Calu3 (cell line): ENCODE measurements at regions of chr1 and their contacts with region 1.

Region 1: DNA sequence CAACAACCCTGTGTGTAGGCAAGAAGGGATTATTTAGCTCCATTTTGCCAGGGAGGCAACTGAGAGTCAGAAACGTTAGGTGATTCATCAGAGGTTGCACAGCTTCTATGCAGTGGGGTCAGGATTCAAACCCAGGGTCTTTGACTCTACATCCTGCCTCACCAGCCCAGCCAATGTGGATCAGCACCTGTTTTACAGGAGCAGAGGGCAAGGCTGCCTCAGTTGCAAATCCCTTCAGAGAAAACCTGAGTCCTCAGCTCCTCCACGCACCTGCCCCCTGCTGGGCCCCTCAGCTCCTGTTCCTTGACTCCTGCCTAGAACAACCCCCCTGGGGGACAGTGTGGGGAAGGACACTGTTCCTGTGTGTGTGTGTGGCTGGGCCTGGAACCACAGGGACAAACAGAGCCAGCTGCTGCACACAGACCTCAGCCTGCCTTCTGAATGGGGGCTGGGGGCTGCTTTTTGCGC is 61.6 kb downstream of the LRRN2 start:
- DNase-seq: peak; percentile 55
- H3K4me3 Mint-ChIP-seq: no peak overlapping the region
- H3K27ac Mint-ChIP-seq: no peak overlapping the region
- H3K4me1 Mint-ChIP-seq: peaks cover 42% of the 10 kb centered on the region
- H3K27me3 Mint-ChIP-seq: peaks cover 41% of the 10 kb centered on the region
- CTCF ChIP-seq: peak; percentile 54

Region 2: DNA sequence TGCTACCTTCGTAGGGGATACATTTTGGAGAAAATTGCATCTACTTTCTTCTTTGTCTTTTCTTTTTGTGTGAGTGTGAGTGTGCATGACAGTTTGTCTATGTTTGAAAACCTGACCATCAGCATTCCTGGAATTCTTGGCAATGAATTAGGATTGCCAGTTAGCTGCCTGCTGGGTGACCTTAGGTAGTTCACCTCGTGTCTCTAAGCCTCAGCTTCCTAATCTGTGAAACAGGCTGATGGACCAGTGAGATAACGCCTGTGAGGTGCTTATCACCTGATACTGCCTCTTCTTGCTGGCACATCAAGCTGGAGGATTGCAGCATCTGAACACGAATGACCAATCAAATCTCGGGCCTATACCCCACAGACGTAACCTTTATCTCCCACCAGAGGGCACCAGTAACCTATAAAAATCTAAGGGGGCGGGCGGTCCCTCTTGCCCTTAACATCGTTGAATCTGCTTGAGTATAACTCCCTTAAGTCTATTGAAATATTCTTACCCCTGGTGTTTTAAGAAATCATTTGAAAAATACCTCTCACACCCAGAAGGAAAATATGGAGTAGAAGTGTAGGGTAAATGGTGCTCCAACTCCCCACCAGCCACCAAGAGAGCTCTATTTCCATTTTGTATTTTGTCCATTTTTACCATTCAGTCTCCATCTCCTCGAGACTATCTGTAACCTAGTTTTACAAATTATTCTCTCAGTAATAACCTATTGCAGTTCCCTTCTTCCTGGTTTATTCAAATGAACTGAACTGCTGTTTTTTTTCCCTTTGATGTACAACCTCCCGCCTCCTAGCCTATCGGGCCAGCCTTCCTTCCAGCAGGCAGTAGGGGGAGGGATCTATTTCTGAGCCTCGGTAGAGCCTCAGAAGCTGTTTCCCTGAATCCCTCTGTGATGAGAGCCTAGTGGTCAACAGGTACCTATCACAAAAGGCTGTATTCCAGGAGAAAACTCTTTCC is 58.0 kb before region 1 on chr1:
- CTCF ChIA-PET with region 1: interaction called, 10 read pairs
- intact Hi-C with region 1: no loop called
- DNase-seq: peak; percentile 65
- H3K4me3 Mint-ChIP-seq: peak overlapping the region; percentile 13
- H3K27ac Mint-ChIP-seq: no peak overlapping the region
- H3K4me1 Mint-ChIP-seq: peaks cover 32% of the 10 kb centered on the region
- H3K27me3 Mint-ChIP-seq: no peaks in the 10 kb centered on the region
- CTCF ChIP-seq: peak; percentile 87

Region 3: GRCh38 chr1:204692325-204692840 is 68.5 kb after region 1 on chr1:
- CTCF ChIA-PET with region 1: no interaction called
- intact Hi-C with region 1: loop called (anchors 10 kb)
- DNase-seq: peak; percentile 22
- H3K4me3 Mint-ChIP-seq: no peak overlapping the region
- H3K27ac Mint-ChIP-seq: no peak overlapping the region
- H3K4me1 Mint-ChIP-seq: no peaks in the 10 kb centered on the region
- H3K27me3 Mint-ChIP-seq: peaks cover 82% of the 10 kb centered on the region
- CTCF ChIP-seq: no peak

Region 4: DNA sequence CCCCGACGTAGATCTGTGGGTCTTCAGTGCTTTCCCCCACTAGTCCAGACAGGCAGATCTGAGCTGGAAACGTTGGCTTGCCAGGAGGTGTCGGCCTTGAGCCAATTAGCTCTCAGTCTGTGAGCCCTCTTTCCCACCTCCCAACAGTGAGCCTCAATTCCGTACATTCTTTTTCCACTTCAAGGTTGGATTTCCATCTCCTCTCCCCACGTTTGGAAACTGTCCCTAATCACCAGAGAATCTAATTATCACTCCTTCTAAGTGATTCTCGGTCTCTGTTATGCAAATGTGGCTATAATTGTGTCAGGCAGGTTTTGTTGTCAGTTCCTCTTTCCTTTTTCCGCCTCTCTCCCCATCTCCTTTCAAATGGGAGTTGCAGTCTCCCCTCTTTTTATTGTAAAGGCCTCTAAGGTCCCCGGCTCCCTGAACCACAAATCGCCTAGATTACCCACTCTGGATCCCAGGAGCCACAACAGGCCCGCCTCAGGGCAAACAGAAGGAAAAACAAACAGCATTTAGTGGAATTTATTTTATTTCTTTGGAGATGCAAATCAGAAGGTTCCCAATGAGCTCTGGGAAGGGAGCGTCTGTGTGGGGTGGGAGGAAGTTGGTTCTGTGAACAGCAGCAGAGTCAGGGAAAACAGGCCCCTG is 91.1 kb after region 1 on chr1:
- CTCF ChIA-PET with region 1: no interaction called
- intact Hi-C with region 1: no loop called
- DNase-seq: no peak
- H3K4me3 Mint-ChIP-seq: no peak overlapping the region
- H3K27ac Mint-ChIP-seq: no peak overlapping the region
- H3K4me1 Mint-ChIP-seq: peaks cover 4% of the 10 kb centered on the region
- H3K27me3 Mint-ChIP-seq: peaks cover 55% of the 10 kb centered on the region
- CTCF ChIP-seq: no peak

Region 5: DNA sequence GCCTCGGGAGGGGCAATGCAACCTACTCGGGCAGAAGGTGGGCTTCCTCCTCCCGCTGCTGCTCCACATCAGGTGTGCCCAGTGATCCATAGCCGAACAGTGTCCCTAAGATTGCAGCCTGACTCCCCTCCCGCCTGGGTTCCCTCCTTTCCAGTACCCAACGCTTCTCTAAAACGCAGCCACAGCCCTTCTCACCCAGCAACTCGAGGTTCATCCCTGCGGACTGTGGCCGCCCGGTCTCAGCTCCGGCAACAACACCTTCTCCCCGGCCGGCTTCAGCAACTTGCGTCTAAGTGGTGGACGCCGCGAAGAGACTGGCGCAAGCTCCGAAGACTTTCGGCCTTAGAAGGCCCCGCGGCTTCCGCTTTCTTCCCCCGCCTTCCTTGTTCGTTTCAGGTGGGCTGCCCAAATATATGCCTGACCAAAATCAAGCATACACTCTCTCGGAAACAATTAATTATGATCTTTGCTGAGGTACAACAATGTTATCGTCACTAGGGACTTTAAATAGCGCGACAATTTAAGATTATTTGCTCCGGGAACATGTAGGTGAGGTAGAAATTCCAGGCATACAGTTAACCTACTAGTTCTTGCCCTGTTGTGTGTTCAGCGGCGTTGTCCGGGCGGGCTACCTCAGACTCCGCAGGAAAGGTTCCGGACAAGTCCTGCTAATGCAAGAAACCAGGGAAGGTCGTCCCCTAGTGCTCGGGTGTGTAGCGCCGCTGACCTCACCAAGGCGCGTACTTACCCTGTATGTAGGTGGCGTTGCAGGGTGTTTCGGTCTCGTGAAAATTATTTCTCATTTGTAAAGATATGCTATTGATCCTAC is 497.9 kb after region 1 on chr1 and contains the start of gene RBBP5:
- CTCF ChIA-PET with region 1: no interaction called
- intact Hi-C with region 1: no loop called
- DNase-seq: peak; percentile 98
- H3K4me3 Mint-ChIP-seq: peak within 1 kb of the TSS; percentile 93
- H3K27ac Mint-ChIP-seq: peak within 1 kb of the TSS; percentile 94
- H3K4me1 Mint-ChIP-seq: peaks cover 34% of the 10 kb centered on the region
- H3K27me3 Mint-ChIP-seq: no peaks in the 10 kb centered on the region
- CTCF ChIP-seq: peak; percentile 69
- total RNA-seq, gene RBBP5: 21.9 and 22.0 TPM in 2 replicates